T-cell (primary cell): ENCODE measurements at regions of chr6 and their contacts with region 1.

Region 1: DNA sequence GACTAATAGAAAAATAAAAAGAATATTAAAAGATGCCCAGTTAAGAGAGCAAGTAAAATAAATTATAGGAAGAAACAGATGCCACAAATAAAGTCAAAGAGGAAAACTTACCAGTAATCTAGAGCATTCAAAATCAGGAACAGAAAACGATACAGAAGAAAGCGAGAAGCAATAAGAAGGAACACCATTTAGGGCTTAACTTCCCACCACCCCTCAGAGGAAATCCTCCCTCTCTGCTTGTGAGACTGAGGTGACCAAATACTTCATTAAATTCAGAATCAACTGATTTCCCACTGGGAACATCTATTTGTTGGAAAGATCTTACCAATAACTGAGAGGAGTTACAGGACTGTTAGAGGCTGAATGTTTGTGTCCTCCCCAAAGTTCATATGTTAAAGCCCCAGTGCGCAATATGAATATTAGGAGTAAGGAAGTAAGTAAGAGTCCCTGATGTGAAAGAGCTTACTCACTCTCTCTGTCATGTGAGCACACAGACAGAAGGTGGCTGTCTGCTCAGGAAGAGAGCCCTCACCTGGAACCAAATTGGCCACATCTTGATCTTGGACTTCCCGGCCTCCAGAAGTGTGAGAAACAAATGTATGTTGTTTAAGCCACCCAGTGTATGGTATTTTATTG is 19.5 kb downstream of the KATNA1 start:
- DNase-seq: no peak
- ATAC-seq: no peak
- H3K4me3 ChIP-seq: no peak overlapping the region
- H3K4me3 Mint-ChIP-seq: no peak overlapping the region
- H3K27ac ChIP-seq: no peak overlapping the region
- H3K27ac Mint-ChIP-seq: peak overlapping the region in 1 of 2 donors; percentile 3
- H3K4me1 ChIP-seq: no peaks in the 10 kb centered on the region
- H3K4me1 Mint-ChIP-seq: peaks cover 0 to 12% (median 0%) of the 10 kb centered on the region in 3 donors
- H3K27me3 ChIP-seq: no peaks in the 10 kb centered on the region
- H3K27me3 Mint-ChIP-seq: no peaks in the 10 kb centered on the region

Region 2: GRCh38 chr6:149389509-149390297 is 239.3 kb before region 1 on chr6:
- CTCF ChIA-PET with region 1: no interaction called
- POLR2A ChIA-PET with region 1: no interaction called
- DNase-seq: no peak
- ATAC-seq: no peak
- H3K4me3 ChIP-seq: no peak overlapping the region
- H3K4me3 Mint-ChIP-seq: no peak overlapping the region
- H3K27ac ChIP-seq: no peak overlapping the region
- H3K27ac Mint-ChIP-seq: peak overlapping the region in 1 of 2 donors; percentile 39
- H3K4me1 ChIP-seq: peaks cover 0 to 17% of the 10 kb centered on the region in 2 experiments
- H3K4me1 Mint-ChIP-seq: peaks cover 68 to 77% (median 72%) of the 10 kb centered on the region in 3 donors
- H3K27me3 ChIP-seq: no peaks in the 10 kb centered on the region
- H3K27me3 Mint-ChIP-seq: no peaks in the 10 kb centered on the region

Region 3: DNA sequence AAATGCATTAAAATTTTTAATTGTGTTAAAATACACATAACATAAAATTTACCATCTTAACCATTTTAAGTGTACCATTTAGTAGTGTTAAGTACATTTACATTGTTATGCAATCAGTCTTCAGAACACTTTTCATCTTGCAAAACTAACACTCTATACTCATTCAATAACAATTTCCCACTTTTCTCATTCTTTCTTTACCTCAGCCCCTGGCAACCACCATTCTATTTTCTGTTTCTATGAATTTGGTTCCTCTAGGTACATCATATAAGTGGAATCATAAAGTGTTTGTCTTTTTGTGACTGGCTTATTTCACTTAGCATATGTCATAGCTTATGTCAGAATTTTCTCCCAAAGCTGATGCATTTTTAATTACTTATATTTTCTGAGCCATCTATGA is 152.7 kb after region 1 on chr6:
- CTCF ChIA-PET with region 1: no interaction called
- POLR2A ChIA-PET with region 1: interaction called in 1 of 2 experiments, 10 read pairs
- DNase-seq: no peak
- ATAC-seq: no peak
- H3K4me3 ChIP-seq: no peak overlapping the region
- H3K4me3 Mint-ChIP-seq: no peak overlapping the region
- H3K27ac ChIP-seq: no peak overlapping the region
- H3K27ac Mint-ChIP-seq: no peak overlapping the region
- H3K4me1 ChIP-seq: no peaks in the 10 kb centered on the region
- H3K4me1 Mint-ChIP-seq: peaks cover 0 to 6% (median 2%) of the 10 kb centered on the region in 3 donors
- H3K27me3 ChIP-seq: no peaks in the 10 kb centered on the region
- H3K27me3 Mint-ChIP-seq: no peaks in the 10 kb centered on the region

Region 4: GRCh38 chr6:149806127-149806526 is 177.1 kb after region 1 on chr6:
- CTCF ChIA-PET with region 1: interaction called in 1 of 2 experiments, 11 read pairs
- POLR2A ChIA-PET with region 1: no interaction called
- DNase-seq: no peak
- ATAC-seq: peak in 1 of 4 experiments; percentile 39
- H3K4me3 ChIP-seq: no peak overlapping the region
- H3K4me3 Mint-ChIP-seq: no peak overlapping the region
- H3K27ac ChIP-seq: no peak overlapping the region
- H3K27ac Mint-ChIP-seq: peak overlapping the region; percentile 30 to 50
- H3K4me1 ChIP-seq: peaks cover 0 to 3% of the 10 kb centered on the region in 2 experiments
- H3K4me1 Mint-ChIP-seq: peaks cover 5 to 24% (median 17%) of the 10 kb centered on the region in 3 donors
- H3K27me3 ChIP-seq: no peaks in the 10 kb centered on the region
- H3K27me3 Mint-ChIP-seq: no peaks in the 10 kb centered on the region